Activated CD4-positive, alpha-beta memory T cell treated with anti-CD3 and anti-CD28 coated beads for 36 hours (primary cell): ENCODE measurements at regions of chr3 and their contacts with region 1.

Region 1: DNA sequence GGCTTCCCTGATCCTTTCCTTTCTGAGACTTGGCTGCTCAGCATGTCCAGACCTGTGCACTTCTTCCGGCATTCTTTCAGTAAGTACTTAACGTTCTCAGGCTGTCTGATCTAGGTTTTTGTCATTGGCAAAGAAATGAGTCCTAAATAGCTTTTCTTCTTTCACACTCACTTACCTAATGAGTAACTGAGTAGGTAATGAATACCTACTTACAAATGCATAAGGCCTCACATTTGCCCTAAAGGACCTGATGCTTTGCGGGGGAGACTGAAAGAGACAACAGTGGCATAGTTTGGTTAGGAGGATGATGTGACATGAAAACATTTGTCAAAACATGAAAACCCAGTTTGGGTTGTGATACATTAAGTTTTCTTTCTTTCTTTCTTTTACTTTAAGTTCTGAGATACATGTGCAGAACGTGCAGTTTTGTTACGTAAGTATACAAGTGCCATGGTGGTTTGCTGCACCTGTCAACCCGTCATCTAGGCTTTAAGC is 516.7 kb upstream of the CFAP20DC start:
- DNase-seq: peak; percentile 66
- H3K4me3 Mint-ChIP-seq: no peak overlapping the region
- H3K27ac Mint-ChIP-seq: peak overlapping the region; percentile 18
- H3K4me1 Mint-ChIP-seq: peaks cover 17% of the 10 kb centered on the region
- H3K27me3 Mint-ChIP-seq: peaks cover 9% of the 10 kb centered on the region

Region 2: DNA sequence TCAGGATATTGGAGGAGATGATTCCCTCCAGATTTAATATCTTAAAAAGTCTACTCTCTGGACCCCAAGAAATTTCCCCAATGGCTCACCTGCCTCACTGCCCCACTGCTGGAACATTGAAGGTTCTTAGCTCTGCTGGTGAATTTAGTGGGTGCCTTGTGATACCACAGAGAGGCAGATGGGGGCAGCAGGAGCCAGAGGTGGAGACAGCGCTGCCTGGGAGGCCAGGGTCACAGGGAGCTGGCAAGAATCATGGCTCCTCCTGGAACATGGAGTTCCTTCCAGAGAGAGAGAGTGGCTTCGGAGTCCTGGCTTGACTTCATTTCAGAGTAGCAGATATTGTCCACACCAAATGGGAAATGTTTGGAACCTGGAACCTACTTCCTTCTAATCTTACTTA is 253.2 kb before region 1 on chr3:
- CTCF ChIA-PET with region 1: interaction called, 8 read pairs
- POLR2A ChIA-PET with region 1: no interaction called
- intact Hi-C with region 1: loop called (anchors 5 kb)
- DNase-seq: peak; percentile 68
- H3K4me3 Mint-ChIP-seq: no peak overlapping the region
- H3K27ac Mint-ChIP-seq: no peak overlapping the region
- H3K4me1 Mint-ChIP-seq: peaks cover 23% of the 10 kb centered on the region
- H3K27me3 Mint-ChIP-seq: no peaks in the 10 kb centered on the region

Region 3: DNA sequence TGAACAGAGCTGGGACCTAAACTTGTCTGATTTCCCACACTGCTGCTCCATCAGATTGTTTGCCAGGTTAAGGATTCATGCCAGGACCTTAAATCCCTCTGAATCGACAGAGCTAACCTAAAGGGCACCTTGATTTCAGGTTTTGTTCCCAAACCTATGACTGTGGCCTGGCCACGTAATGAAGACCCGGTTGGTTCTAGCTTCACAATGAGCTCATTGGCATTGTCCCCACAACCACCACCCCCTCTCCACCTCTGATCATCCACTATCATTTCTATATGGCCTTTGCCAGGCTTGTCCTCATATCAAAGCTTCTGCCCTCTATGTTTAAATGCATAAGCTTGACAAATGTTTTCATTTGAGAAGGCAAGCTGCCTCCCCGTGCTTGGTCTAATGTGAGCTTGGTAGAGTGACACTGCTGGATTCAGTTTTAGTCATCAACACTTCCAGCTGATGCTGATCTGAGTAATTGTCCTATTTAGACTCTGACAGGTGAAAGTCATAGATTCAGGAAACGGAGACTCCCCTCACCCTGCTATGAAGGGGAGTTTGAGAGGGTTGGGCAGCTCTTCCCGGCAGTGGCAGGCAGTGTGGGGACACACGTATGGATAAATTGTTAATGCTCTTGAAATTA is 109.6 kb before region 1 on chr3:
- CTCF ChIA-PET with region 1: no interaction called
- POLR2A ChIA-PET with region 1: interaction called, 5 read pairs
- intact Hi-C with region 1: loop called (anchors 1 kb)
- DNase-seq: peak; percentile 63
- H3K4me3 Mint-ChIP-seq: no peak overlapping the region
- H3K27ac Mint-ChIP-seq: peak overlapping the region; percentile 10
- H3K4me1 Mint-ChIP-seq: peaks cover 26% of the 10 kb centered on the region
- H3K27me3 Mint-ChIP-seq: no peaks in the 10 kb centered on the region

Region 4: GRCh38 chr3:59480486-59480995 is 86.0 kb before region 1 on chr3:
- CTCF ChIA-PET with region 1: no interaction called
- POLR2A ChIA-PET with region 1: no interaction called
- intact Hi-C with region 1: loop called (anchors 5 kb)
- DNase-seq: no peak
- H3K4me3 Mint-ChIP-seq: peak overlapping the region; percentile 6
- H3K27ac Mint-ChIP-seq: no peak overlapping the region
- H3K4me1 Mint-ChIP-seq: peaks cover 10% of the 10 kb centered on the region
- H3K27me3 Mint-ChIP-seq: no peaks in the 10 kb centered on the region

Region 5: GRCh38 chr3:59540696-59541095 is 25.8 kb before region 1 on chr3:
- CTCF ChIA-PET with region 1: no interaction called
- POLR2A ChIA-PET with region 1: no interaction called
- intact Hi-C with region 1: loop called (anchors 2 kb)
- DNase-seq: peak; percentile 11
- H3K4me3 Mint-ChIP-seq: no peak overlapping the region
- H3K27ac Mint-ChIP-seq: peak overlapping the region; percentile 42
- H3K4me1 Mint-ChIP-seq: peaks cover 26% of the 10 kb centered on the region
- H3K27me3 Mint-ChIP-seq: peaks cover 3% of the 10 kb centered on the region